Activated T-helper 1 cell treated with anti-CD3 and anti-CD28 coated beads, Interleukin-12 subunit alpha, Interleukin-12 subunit beta, Interleukin-2, Interleukin-4 antibody, amounts not matched to agents 30 ng/mL and 10 ng/mL and 1 ng/mL, durations not matched to agents 14 hours and 24 hours and 36 hours (primary cell): ENCODE measurements at regions of chr9 and their contacts with region 1.

Region 1: DNA sequence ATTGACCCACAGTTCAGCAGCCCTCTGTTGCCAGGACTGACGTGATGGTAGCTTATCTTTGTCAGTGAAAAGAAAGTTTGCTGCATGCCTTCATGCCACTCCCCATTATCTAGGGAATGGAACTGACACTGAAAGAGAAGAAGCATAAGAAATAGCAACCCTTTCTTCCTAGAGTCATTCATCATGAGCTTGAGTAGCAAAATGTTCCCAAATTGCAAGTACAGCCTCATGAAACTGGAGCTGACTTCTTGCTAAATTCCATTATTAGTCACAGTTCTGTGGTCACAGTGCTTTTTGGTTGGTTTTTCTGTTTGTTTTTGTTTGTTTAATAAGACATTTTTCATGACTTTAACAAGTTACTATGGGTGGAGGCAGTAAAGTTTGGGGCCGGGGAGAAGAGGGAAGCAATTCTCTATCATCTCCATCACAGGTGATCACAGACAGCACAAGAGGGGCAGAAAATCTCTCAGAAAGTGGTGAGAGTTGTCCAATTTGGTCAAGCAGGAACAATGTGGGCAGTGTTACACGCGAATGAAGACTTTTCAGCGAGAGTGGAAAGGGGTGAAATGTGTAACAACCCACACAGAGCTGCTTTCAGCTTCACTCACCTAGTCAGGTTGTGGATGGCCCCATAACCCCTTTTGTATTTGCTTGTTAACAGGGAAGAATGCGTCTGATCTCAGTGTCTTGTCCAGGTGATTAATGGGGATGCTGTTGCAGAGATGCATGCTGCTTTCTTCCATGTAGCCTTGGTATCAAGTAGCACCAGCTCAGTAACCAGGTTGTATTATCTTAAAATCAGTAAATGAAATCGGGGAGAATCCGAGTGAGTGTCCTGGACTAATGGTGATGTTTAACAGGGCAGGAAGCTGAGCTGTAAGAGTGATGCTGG is 440.4 kb downstream of the DMRT2 start:
- DNase-seq: no peak
- H3K4me3 Mint-ChIP-seq: no peak overlapping the region
- H3K27ac Mint-ChIP-seq: peak overlapping the region; percentile 82
- H3K4me1 Mint-ChIP-seq: peaks cover 9% of the 10 kb centered on the region
- H3K27me3 Mint-ChIP-seq: no peaks in the 10 kb centered on the region

Region 2: DNA sequence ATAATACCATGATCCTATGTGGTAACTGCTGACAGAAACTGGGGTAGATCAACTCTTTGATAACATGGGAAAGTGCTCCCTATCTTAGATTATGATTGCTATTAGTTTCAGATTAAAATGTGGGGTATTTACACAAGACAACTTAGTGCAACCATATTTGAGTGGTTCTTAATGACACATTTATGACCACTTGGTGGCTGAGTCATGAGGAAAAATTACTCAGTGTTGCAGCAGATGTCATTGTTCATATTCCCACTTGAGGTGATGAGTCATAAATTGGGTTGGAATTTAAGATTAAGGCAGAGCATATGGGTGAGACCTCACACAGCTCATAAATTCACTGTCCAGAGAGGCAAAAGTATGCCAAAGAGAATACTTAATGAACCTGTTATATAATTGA is 32.1 kb before region 1 on chr9:
- intact Hi-C with region 1: no loop called
- DNase-seq: no peak
- H3K4me3 Mint-ChIP-seq: no peak overlapping the region
- H3K27ac Mint-ChIP-seq: no peak overlapping the region
- H3K4me1 Mint-ChIP-seq: no peaks in the 10 kb centered on the region
- H3K27me3 Mint-ChIP-seq: peaks cover 5% of the 10 kb centered on the region

Region 3: DNA sequence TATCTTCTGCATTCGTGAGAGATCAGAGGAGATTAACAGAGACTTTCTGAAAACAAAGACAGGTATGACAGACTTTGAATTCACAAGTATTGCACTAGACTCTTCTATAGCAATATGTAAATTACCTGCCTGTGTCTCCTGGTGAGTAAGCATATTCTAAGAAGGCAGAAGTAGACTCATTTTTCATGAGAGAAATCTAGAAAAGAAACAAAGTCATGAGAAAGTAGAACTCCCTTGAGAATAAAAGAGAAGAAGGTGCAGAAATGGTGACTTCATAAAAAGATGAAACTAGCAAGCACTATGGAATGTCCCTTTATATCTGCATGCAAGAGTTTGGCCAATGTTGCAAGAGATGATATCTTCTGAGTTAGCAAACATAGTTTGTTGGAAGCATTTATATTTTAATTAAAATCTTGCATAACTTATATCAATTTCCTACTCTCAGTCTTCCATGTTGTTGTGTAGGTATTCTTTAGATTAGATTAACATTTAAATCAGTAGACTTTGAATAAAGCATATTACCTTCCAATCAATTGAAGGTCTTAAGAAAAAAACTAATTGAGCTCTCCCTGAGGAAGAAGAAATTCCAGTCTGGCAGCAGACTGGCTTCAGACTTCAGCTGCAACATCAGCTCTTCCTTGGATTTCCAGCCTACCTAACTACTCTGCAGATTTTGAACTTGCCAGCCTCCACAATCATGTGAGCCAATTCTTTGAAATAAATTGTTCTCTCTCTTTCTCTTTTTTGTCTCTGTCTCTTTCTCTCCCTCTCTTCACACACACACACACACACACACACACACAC is 20.4 kb before region 1 on chr9:
- intact Hi-C with region 1: loop called (anchors 1 kb)
- DNase-seq: no peak
- H3K4me3 Mint-ChIP-seq: no peak overlapping the region
- H3K27ac Mint-ChIP-seq: no peak overlapping the region
- H3K4me1 Mint-ChIP-seq: no peaks in the 10 kb centered on the region
- H3K27me3 Mint-ChIP-seq: no peaks in the 10 kb centered on the region

Region 4: GRCh38 chr9:1505489-1505888 is 14.9 kb after region 1 on chr9:
- intact Hi-C with region 1: loop called (anchors 1 kb)
- DNase-seq: no peak
- H3K4me3 Mint-ChIP-seq: no peak overlapping the region
- H3K27ac Mint-ChIP-seq: peak overlapping the region; percentile 64
- H3K4me1 Mint-ChIP-seq: no peaks in the 10 kb centered on the region
- H3K27me3 Mint-ChIP-seq: no peaks in the 10 kb centered on the region

Region 5: DNA sequence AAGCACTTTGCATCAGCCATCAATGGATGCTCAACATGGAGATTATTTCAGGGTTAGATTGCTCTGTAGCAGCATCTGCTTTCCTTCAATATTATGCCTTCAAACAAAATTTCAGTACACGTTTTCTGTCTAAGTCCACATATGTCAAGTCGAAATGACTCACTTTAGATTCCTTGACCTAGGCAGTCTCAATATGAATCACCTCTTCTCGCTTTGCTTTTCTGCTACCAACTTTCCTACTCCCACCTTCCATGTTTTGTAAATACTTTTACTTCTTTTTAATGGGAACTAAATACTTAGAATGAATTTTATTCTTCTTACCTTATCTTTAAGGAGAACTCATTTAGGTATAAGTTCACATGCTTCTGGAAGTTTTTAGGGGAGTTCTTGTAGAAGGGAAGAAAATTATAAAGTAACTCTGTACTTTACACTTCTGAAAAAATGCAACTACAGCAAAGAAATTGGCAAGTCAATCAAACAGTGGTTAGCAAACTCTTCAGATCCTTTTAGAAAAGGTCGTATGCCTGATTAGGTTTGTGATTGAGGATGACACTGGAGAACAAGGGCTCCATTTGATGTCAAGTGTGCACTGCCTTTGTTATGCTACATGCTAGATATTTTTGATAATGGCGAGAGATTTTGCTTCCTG is 46.1 kb after region 1 on chr9:
- intact Hi-C with region 1: loop called (anchors 1 kb)
- DNase-seq: no peak
- H3K4me3 Mint-ChIP-seq: no peak overlapping the region
- H3K27ac Mint-ChIP-seq: peak overlapping the region; percentile 48
- H3K4me1 Mint-ChIP-seq: peaks cover 18% of the 10 kb centered on the region
- H3K27me3 Mint-ChIP-seq: no peaks in the 10 kb centered on the region

Region 6: DNA sequence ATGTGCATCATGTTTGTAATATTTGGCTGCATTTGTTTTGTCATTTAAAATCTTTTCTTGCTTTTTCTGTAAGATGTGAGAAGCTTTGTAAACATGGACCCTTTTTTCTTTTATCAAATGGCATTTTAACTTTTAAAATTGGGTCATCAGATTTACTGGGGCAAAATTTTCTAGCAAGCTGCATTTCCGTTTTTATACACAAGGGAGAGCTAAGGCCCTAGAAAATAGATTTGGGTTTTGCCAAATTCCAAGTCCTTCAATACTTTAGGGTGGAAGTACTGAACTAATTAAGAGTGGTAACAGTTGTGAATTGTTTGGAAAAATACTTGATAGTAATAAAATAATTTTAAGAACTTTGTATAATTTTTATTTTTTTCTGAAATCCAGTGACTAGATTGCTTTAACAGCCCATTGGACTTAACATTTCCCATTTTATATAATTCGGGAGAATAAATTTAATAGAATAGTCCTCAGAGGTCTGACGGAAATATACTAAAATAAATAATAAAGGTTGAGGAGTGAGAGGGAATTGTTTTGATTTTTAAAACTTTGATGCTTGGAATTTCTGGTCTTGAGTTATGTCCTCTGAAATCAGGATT is 642.0 kb after region 1 on chr9:
- intact Hi-C with region 1: no loop called
- DNase-seq: no peak
- H3K4me3 Mint-ChIP-seq: no peak overlapping the region
- H3K27ac Mint-ChIP-seq: no peak overlapping the region
- H3K4me1 Mint-ChIP-seq: peaks cover 4% of the 10 kb centered on the region
- H3K27me3 Mint-ChIP-seq: no peaks in the 10 kb centered on the region